GM12878 (cell line): ENCODE measurements at regions of chr10 and their contacts with region 1.

Region 1: DNA sequence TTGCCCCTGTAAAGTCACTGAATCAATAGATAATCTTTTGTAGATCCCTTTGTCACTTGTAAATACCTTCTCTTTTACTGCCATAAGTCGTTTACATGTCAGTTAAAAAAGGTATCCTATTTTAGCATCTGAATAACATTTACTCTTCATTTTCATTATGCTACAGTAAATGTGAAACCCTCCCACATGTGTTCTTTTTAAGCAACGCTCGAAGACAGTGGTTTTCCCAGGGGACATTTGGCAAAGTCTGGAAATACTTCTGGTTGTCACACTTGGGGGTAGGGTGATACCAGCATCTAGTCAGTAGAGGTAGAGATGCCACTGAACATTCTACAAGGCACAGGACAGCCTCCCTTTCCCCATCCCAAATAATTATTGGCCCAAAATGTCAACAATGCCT is 23.7 kb downstream of the ATAD1 start:
- DNase-seq: peak; percentile 48
- ATAC-seq: peak; percentile 63
- H3K4me3 ChIP-seq: no peak overlapping the region
- H3K27ac ChIP-seq: peak overlapping the region; percentile 7
- H3K4me1 ChIP-seq: peaks cover 18% of the 10 kb centered on the region
- H3K27me3 ChIP-seq: no peaks in the 10 kb centered on the region
- CTCF ChIP-seq: no peak
- EP300 ChIP-seq: peak in 1 of 2 experiments; percentile 59; a peak in 1 of 4 replicates
- POLR2A ChIP-seq: no peak
- RAD21 ChIP-seq: no peak

Region 2: DNA sequence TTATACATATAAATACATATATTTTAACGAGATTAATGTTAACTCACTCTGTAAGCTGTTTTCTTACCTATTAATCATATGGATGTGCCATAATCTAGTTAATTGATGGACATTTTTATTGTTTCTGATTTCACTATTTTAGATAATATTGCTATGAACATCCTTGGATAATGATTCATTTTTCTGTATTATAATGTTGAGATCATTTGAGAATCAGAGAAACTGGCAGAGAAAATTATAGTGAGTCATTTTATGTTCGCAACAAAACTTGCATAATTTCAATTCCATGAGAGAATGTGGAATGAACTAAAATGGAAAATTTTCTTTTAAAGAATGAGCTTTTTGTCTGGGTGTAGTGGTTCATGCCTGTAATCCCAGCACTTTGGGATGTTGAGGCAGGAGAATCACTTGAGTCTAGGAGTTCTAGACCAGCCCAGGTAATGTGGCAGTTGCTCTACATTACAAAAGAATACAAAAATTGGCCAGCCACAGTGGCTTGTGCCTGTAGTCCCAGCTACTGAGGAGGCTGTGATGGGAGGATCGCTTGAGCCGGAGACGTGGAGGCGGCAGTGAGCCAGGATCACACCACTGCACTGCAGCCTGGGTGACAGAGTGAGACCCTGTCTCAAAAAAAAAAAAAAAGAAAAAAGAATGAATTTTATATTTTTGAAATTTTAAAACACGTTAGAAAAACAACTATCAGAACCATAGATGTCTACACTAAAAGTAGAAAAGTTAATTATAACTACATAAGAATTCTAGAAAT is 94.1 kb before region 1 on chr10:
- CTCF ChIA-PET with region 1: no interaction called
- POLR2A ChIA-PET with region 1: no interaction called
- RAD21 ChIA-PET with region 1: no interaction called
- SMC1A ChIA-PET with region 1: no interaction called
- in situ Hi-C with region 1: no loop called
- intact Hi-C with region 1: no loop called
- DNase-seq: no peak
- ATAC-seq: no peak
- H3K4me3 ChIP-seq: no peak overlapping the region
- H3K27ac ChIP-seq: no peak overlapping the region
- H3K4me1 ChIP-seq: no peaks in the 10 kb centered on the region
- H3K27me3 ChIP-seq: no peaks in the 10 kb centered on the region; a peak in 1 of 4 replicates
- CTCF ChIP-seq: no peak
- EP300 ChIP-seq: no peak
- POLR2A ChIP-seq: no peak
- RAD21 ChIP-seq: no peak

Region 3: DNA sequence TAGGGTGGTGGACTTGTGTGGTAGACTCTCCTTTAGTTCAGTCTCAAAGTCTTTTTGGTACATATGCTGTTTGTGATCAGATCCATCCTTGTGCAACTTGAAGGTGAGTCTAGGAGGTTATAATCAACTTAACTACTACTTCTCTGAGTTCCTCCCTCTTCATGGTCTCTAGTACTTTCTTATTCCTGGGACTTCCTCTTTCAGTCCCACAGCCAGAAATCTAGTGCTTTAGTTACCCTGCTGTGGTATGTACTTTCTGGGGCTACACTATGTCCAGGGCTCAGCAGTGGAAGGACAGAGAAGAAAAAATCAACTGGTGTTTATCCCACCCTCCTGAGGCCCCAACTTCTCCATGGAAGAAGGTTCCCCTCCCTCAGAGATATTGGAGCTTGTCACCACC is 43.2 kb after region 1 on chr10:
- CTCF ChIA-PET with region 1: no interaction called
- POLR2A ChIA-PET with region 1: no interaction called
- RAD21 ChIA-PET with region 1: no interaction called
- SMC1A ChIA-PET with region 1: no interaction called
- in situ Hi-C with region 1: no loop called
- intact Hi-C with region 1: no loop called
- DNase-seq: no peak
- ATAC-seq: peak; percentile 77
- H3K4me3 ChIP-seq: no peak overlapping the region
- H3K27ac ChIP-seq: no peak overlapping the region
- H3K4me1 ChIP-seq: peaks cover 6% of the 10 kb centered on the region; the same call in 1 of the 2 replicates
- H3K27me3 ChIP-seq: no peaks in the 10 kb centered on the region
- CTCF ChIP-seq: no peak
- EP300 ChIP-seq: no peak
- POLR2A ChIP-seq: no peak
- RAD21 ChIP-seq: no peak

Region 4: GRCh38 chr10:88042160-88043100 is 248.1 kb after region 1 on chr10:
- CTCF ChIA-PET with region 1: no interaction called
- POLR2A ChIA-PET with region 1: no interaction called
- RAD21 ChIA-PET with region 1: no interaction called
- SMC1A ChIA-PET with region 1: no interaction called
- in situ Hi-C with region 1: no loop called
- intact Hi-C with region 1: no loop called
- DNase-seq: no peak
- ATAC-seq: no peak
- H3K4me3 ChIP-seq: no peak overlapping the region
- H3K27ac ChIP-seq: no peak overlapping the region
- H3K4me1 ChIP-seq: no peaks in the 10 kb centered on the region
- H3K27me3 ChIP-seq: no peaks in the 10 kb centered on the region
- CTCF ChIP-seq: no peak
- EP300 ChIP-seq: no peak
- POLR2A ChIP-seq: no peak
- RAD21 ChIP-seq: no peak

Region 5: DNA sequence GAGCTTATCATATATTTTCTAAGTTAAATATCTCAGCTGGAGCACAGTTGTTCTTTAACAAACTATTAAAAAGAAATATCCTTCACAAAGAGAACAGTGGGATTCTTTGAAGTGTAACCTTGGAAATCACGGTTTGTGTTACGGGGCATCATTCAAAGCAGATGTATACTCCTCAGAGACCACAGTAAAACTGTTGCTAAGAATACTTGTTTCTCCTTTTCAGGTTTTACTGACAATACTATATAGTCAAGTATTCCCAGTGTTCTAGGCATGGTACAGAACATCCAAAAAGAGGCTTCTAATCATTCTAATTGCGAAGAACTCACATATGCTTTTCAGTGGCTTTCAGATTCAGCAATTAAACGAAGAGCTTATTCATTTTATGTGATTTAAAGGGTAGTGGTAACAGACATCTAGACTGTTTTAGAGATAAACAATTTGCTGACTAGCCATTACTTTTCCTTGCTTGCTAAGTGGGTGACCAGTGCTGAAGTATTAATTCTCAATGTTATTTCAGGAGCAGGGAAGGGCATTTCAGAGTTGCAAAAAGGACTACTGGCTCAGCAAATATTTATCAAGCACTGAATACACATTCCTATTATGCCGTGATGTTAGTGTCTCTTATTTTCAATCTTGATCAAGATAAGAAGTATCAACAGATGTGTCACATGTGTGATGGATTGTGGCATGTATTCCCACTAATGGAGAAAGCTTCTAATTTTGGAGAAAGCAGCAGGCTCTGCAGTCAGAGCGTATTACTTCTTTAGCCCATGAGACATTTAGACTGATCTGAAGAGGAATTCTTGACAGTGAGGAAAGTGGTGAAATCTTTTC is 552.1 kb after region 1 on chr10:
- CTCF ChIA-PET with region 1: no interaction called
- POLR2A ChIA-PET with region 1: interaction called, 10 read pairs
- RAD21 ChIA-PET with region 1: no interaction called
- SMC1A ChIA-PET with region 1: no interaction called
- in situ Hi-C with region 1: no loop called
- intact Hi-C with region 1: no loop called
- DNase-seq: no peak
- ATAC-seq: no peak
- H3K4me3 ChIP-seq: no peak overlapping the region
- H3K27ac ChIP-seq: no peak overlapping the region
- H3K4me1 ChIP-seq: peaks cover 3% of the 10 kb centered on the region; the same call in 1 of the 2 replicates
- H3K27me3 ChIP-seq: no peaks in the 10 kb centered on the region
- CTCF ChIP-seq: no peak
- EP300 ChIP-seq: no peak
- POLR2A ChIP-seq: no peak
- RAD21 ChIP-seq: no peak